WTC11 (cell line): ENCODE measurements at regions of chr11 and their contacts with region 1.

Region 1: GRCh38 chr11:70568038-70568813 is 169.9 kb downstream of the CTTN start:
- DNase-seq: peak; percentile 67
- ATAC-seq: peak; percentile 82
- H3K4me3 Mint-ChIP-seq: peak overlapping the region; percentile 18; the same call in 1 of the 2 replicates
- H3K27ac Mint-ChIP-seq: peak overlapping the region; percentile 91
- H3K4me1 Mint-ChIP-seq: peaks cover 21% of the 10 kb centered on the region
- H3K27me3 Mint-ChIP-seq: no peaks in the 10 kb centered on the region
- CTCF ChIP-seq: no peak

Region 2: DNA sequence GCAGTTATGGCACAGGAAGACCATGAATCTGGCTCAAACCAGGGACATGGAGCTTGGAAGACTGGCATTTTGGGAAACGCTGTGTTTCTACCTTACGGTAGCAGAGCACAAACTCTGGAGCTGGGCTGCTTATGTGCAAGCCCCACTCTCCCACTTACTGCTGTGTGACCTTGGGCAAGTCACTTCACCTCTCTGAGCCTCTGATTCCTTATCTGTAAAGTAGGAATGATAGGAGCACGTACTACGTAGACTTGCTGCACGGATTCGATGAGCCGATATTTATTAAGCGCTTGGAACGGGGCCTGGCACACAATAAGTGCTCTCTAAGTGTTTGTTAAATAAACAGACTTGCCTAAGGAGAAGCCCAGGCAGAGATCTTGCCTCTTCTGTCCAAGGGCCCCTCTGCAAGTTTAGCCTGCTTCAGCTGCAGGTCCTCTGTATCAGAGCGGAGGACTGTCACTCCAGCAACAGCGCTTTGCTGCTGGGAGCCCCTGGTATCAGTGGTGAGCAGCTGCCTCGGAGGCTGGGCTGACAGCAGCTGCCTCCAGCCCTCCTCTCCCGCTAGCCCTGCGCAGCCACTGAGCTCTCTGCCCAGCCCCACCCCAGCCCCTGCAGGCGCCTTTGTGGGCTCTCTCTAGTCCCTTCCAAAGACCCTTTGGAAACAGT is 587.0 kb before region 1 on chr11:
- CTCF ChIA-PET with region 1: no interaction called
- POLR2A ChIA-PET with region 1: no interaction called
- DNase-seq: no peak
- ATAC-seq: no peak
- H3K4me3 Mint-ChIP-seq: no peak overlapping the region
- H3K27ac Mint-ChIP-seq: no peak overlapping the region
- H3K4me1 Mint-ChIP-seq: peaks cover 52% of the 10 kb centered on the region
- H3K27me3 Mint-ChIP-seq: peaks cover 31% of the 10 kb centered on the region
- CTCF ChIP-seq: no peak

Region 3: GRCh38 chr11:70476669-70477068 is 91.6 kb before region 1 on chr11:
- CTCF ChIA-PET with region 1: no interaction called
- POLR2A ChIA-PET with region 1: no interaction called
- DNase-seq: no peak
- ATAC-seq: no peak
- H3K4me3 Mint-ChIP-seq: no peak overlapping the region
- H3K27ac Mint-ChIP-seq: no peak overlapping the region
- H3K4me1 Mint-ChIP-seq: peaks cover under 1% of the 10 kb centered on the region; the same call in 1 of the 2 replicates
- H3K27me3 Mint-ChIP-seq: no peaks in the 10 kb centered on the region
- CTCF ChIP-seq: no peak

Region 4: DNA sequence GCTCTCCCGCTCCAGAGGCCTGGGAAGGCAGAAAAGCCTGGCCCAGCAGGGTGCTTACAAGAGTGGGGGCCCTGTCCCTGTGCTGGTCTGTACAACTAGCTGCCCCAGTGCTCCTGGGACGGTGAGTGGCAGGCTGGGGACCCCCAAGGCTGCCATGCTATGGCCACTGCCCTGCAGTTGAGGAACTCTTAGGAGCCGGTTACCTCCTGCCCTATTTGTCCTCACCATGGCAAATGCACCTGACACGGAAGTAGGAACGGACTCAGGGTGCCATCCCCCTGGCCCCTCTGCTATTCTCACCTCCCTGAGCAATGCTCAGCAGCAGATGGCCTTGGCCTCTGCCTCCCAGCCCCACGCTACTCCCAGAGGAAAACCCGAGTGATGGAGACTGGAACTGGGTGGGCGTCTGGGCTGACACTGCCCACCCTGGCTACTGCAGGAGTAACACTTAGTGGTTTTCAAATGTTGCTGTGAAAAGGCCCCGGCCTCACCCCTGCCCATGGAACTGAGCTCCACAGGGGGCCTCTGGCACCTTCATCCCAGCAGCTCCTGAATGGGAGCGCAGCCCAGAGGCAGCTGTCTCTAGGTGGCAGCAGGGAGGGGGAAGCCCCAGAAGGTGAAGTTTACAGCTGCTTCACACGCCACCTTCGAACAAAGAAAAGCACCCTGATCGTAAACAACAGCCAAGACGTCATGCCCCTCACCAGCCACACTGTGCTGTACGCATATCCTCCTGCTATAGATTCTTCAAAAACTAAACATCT is 64.6 kb before region 1 on chr11:
- CTCF ChIA-PET with region 1: no interaction called
- POLR2A ChIA-PET with region 1: no interaction called
- DNase-seq: no peak
- ATAC-seq: peak; percentile 56
- H3K4me3 Mint-ChIP-seq: no peak overlapping the region
- H3K27ac Mint-ChIP-seq: peak overlapping the region; percentile 17; the same call in 1 of the 2 replicates
- H3K4me1 Mint-ChIP-seq: peaks cover 13% of the 10 kb centered on the region
- H3K27me3 Mint-ChIP-seq: no peaks in the 10 kb centered on the region
- CTCF ChIP-seq: no peak

Region 5: GRCh38 chr11:70544809-70545537 is 23.3 kb before region 1 on chr11:
- CTCF ChIA-PET with region 1: interaction called, 12 read pairs
- POLR2A ChIA-PET with region 1: no interaction called
- DNase-seq: peak; percentile 52
- ATAC-seq: peak; percentile 76
- H3K4me3 Mint-ChIP-seq: no peak overlapping the region
- H3K27ac Mint-ChIP-seq: peak overlapping the region; percentile 76; the same call in 1 of the 2 replicates
- H3K4me1 Mint-ChIP-seq: peaks cover 36% of the 10 kb centered on the region
- H3K27me3 Mint-ChIP-seq: no peaks in the 10 kb centered on the region
- CTCF ChIP-seq: no peak

Region 6: GRCh38 chr11:70581991-70582885 is 14.0 kb after region 1 on chr11:
- CTCF ChIA-PET with region 1: interaction called, 16 read pairs
- POLR2A ChIA-PET with region 1: no interaction called
- DNase-seq: no peak
- ATAC-seq: no peak
- H3K4me3 Mint-ChIP-seq: no peak overlapping the region
- H3K27ac Mint-ChIP-seq: no peak overlapping the region
- H3K4me1 Mint-ChIP-seq: peaks cover 17% of the 10 kb centered on the region
- H3K27me3 Mint-ChIP-seq: no peaks in the 10 kb centered on the region
- CTCF ChIP-seq: no peak